ENCODE measurements at regions of chr3 and their contacts with region 1.

Region 1: DNA sequence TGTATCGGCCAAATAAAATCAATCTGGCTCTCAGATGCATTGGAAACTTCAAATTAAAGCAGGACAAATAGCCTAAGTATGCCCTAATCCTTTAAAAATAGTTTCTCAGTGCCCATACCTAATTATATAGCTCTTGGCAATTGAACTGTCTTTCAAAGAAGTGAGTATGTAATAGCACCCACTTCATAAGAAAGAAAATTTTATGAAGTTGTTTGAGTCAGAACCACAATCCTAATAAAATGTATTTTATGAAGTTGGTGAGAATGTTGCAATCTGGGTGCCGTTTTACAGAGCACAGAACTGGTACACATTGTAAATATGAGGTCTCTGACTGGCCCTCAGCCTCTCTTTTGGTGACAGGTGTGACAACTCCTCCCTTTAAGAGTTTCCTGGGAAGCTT is 45.4 kb downstream of the EPHB1 start:
- DNase-seq: no peak
- H3K4me3 ChIP-seq: no peak overlapping the region
- H3K27ac ChIP-seq: no peak overlapping the region
- H3K4me1 ChIP-seq: no peaks in the 10 kb centered on the region
- H3K27me3 ChIP-seq: 0 out of 2 replicates have a peak, but pooled peaks cover 6% of the 10 kb centered on the region
- CTCF ChIP-seq: no peak

Region 2: DNA sequence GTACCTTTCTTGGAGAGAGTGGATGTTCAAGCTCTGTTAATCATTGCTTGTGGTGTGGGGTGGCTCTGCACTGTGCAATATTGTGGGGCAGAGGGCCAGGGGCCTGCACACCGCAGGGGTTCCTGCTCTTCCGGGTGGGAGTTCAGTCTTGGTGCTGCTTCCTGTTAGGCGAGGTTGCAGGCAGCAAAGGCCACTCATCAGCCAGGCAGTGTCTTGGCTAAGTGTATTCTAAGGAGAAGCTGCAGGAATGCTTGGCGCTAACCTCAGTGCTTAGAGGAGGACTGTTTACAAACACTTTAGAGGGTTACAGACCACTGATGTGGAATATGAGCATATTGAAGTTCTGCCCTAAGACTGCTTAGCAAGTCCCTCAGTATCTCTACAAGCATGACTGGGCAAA is 272.9 kb before region 1 on chr3:
- CTCF ChIA-PET with region 1: no interaction called
- POLR2A ChIA-PET with region 1: no interaction called
- intact Hi-C with region 1: no loop called
- DNase-seq: no peak
- H3K4me3 ChIP-seq: no peak overlapping the region
- H3K27ac ChIP-seq: no peak overlapping the region
- H3K4me1 ChIP-seq: no peaks in the 10 kb centered on the region
- H3K27me3 ChIP-seq: no peaks in the 10 kb centered on the region
- CTCF ChIP-seq: no peak

Region 3: GRCh38 chr3:134772011-134772410 is 68.4 kb before region 1 on chr3:
- CTCF ChIA-PET with region 1: no interaction called
- POLR2A ChIA-PET with region 1: no interaction called
- intact Hi-C with region 1: no loop called
- DNase-seq: no peak
- H3K4me3 ChIP-seq: no peak overlapping the region
- H3K27ac ChIP-seq: no peak overlapping the region
- H3K4me1 ChIP-seq: no peaks in the 10 kb centered on the region
- H3K27me3 ChIP-seq: peaks cover 22% of the 10 kb centered on the region
- CTCF ChIP-seq: no peak

Region 4: GRCh38 chr3:134794950-134795745 is 45.3 kb before region 1 on chr3 and contains the start of gene EPHB1:
- CTCF ChIA-PET with region 1: interaction called, 25 read pairs
- POLR2A ChIA-PET with region 1: no interaction called
- intact Hi-C with region 1: no loop called
- DNase-seq: peak in 1 of 2 experiments; percentile 60
- H3K4me3 ChIP-seq: no peak within 1 kb of the TSS
- H3K27ac ChIP-seq: no peak within 1 kb of the TSS
- H3K4me1 ChIP-seq: no peaks in the 10 kb centered on the region
- H3K27me3 ChIP-seq: peaks cover 35% of the 10 kb centered on the region
- CTCF ChIP-seq: peak; percentile 78
- total RNA-seq, gene EPHB1: 0.15 TPM in 1 of 2 replicates, not detected in the other

Region 5: DNA sequence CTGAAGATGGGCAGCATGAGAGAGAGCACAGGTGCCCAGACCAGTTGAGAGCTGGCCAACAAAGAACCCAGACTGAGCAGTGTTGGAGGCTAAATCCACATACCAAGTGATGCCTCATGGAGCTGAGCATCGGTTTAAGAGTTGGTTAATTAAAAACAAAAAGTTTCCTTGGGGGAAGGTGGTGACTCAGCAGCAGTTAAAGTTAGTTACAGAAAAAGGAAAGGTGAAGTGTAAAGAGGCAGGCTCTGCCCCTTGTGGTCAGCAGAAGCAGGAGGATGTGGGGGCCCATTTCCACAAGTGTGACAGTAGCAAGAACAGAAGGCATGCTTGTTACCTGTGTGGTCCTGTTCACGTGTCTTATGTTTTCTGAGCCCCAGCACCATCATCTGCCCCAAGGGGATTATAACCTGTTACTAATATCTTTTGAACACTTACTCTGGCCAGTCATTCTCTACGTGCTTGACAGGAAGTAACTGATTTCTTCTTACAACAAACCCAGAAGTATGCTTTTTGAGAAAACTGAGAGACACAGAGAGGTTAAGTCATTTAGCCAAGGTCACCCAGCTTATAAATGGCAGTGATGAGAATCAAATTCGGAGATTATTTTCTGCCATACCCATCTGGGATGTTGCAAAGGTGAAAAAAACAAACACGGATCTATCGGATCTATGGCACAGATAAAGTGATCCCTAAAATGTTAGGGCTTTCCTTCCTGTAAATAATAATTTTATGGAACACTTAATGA is 45.6 kb after region 1 on chr3:
- CTCF ChIA-PET with region 1: no interaction called
- POLR2A ChIA-PET with region 1: no interaction called
- intact Hi-C with region 1: no loop called
- DNase-seq: no peak
- H3K4me3 ChIP-seq: no peak overlapping the region
- H3K27ac ChIP-seq: no peak overlapping the region
- H3K4me1 ChIP-seq: no peaks in the 10 kb centered on the region
- H3K27me3 ChIP-seq: peaks cover 30% of the 10 kb centered on the region
- CTCF ChIP-seq: peak; percentile 28; the same call in 1 of the 2 replicates

Region 6: DNA sequence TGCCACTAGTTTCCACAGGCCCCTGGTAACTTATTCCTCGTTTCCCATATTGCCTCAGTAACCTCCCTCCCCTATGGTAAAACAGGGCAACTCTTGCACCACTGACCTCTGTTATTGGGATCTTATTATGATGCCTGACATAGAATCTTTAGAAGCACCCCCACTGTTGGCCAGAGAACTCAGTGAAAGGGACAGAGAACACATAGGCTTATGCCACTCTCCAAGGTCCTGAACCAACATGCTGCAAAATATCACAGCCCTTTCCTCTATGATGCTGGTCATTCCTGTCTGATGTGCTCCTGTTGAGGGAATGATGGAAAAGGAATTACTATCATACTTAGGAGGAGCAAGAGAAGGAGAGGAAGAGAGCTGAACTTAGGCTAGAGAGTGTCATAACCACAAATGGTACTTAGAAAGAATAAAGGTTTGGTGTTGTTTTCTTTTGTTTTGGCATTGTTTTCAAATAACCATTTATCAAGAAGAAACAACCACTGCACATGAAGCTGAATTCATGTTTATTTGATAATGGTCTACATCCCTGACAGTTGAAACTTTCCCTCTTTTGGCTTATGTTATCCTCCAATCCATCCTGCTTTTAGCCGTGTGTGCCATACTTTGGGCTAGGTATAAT is 284.8 kb after region 1 on chr3:
- CTCF ChIA-PET with region 1: no interaction called
- POLR2A ChIA-PET with region 1: no interaction called
- intact Hi-C with region 1: no loop called
- DNase-seq: no peak
- H3K4me3 ChIP-seq: no peak overlapping the region
- H3K27ac ChIP-seq: no peak overlapping the region
- H3K4me1 ChIP-seq: no peaks in the 10 kb centered on the region
- H3K27me3 ChIP-seq: peaks cover under 1% of the 10 kb centered on the region
- CTCF ChIP-seq: no peak